Endothelial cell of umbilical vein (primary cell): ENCODE measurements at regions of chr17 and their contacts with region 1.

Region 1: GRCh38 chr17:29219378-29220047 is 27.1 kb upstream of the CRYBA1 start:
- DNase-seq: peak; percentile 86
- H3K4me3 ChIP-seq: no peak overlapping the region
- H3K27ac ChIP-seq: no peak overlapping the region
- H3K4me1 ChIP-seq: no peaks in the 10 kb centered on the region
- H3K27me3 ChIP-seq: no peaks in the 10 kb centered on the region
- CTCF ChIP-seq: peak; percentile 86 to 94
- POLR2A ChIP-seq: no peak

Region 2: GRCh38 chr17:29124117-29124924 is 95.2 kb before region 1 on chr17:
- CTCF ChIA-PET with region 1: interaction called, 125 read pairs
- POLR2A ChIA-PET with region 1: no interaction called
- dilution Hi-C with region 1: no loop called
- intact Hi-C with region 1: no loop called
- DNase-seq: peak; percentile 61
- H3K4me3 ChIP-seq: no peak overlapping the region
- H3K27ac ChIP-seq: no peak overlapping the region
- H3K4me1 ChIP-seq: no peaks in the 10 kb centered on the region
- H3K27me3 ChIP-seq: no peaks in the 10 kb centered on the region
- CTCF ChIP-seq: peak; percentile 60 to 61
- POLR2A ChIP-seq: no peak

Region 3: GRCh38 chr17:29195465-29196081 is 23.9 kb before region 1 on chr17:
- CTCF ChIA-PET with region 1: interaction called, 13 read pairs
- POLR2A ChIA-PET with region 1: no interaction called
- dilution Hi-C with region 1: no loop called
- intact Hi-C with region 1: no loop called
- DNase-seq: no peak
- H3K4me3 ChIP-seq: no peak overlapping the region
- H3K27ac ChIP-seq: no peak overlapping the region
- H3K4me1 ChIP-seq: no peaks in the 10 kb centered on the region
- H3K27me3 ChIP-seq: peaks cover 10 to 15% of the 10 kb centered on the region in 2 experiments
- CTCF ChIP-seq: no peak
- POLR2A ChIP-seq: no peak

Region 4: DNA sequence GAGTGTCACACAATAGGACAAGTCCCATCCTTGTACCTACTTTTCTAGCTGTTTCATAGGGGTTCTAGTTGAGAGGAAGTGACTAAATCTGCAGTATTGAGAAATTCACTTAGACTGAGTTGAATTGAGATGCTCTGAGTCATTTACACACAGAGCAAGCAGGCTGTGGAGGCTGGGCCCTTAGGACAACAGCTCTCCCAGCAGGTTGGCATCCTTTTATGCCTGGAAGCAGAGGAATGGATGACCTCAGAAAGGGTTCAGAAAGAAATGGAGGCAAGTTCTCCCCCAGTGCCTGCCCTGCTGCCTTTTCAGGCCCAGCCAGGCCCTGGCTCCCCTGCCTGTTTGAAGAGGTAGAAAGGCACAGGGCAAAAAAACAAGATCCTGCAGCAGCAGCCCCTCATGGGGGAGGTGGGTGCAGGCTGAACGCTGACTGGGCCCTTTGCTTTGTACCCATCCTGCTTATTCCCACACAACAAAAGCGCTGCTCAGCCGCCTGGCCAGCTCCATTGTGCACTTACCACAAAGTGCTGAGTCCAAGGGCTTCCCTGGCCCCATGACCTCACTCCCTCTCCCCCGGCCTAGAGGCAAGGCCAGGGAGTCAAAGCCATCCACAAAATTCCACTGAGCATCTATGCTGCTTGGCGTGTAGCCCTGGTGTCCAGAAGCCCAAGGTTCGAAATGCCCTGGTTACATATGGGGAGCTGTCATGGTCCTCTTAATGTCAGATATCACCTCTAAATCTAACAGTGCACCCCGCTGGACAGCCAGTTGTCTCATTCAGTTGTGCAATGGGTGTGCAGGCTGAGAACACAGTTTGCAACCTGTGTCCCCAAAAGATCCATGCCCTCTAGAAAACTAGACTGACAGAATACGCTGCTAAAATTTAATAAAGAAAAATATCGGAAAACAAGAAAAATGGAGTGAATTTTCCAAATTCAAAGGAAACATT is 21.8 kb after region 1 on chr17:
- CTCF ChIA-PET with region 1: interaction called, 33 read pairs
- POLR2A ChIA-PET with region 1: interaction called, 7 read pairs
- dilution Hi-C with region 1: no loop called
- intact Hi-C with region 1: no loop called
- DNase-seq: peak; percentile 82
- H3K4me3 ChIP-seq: no peak overlapping the region
- H3K27ac ChIP-seq: peak overlapping the region; percentile 41
- H3K4me1 ChIP-seq: peaks cover 12% of the 10 kb centered on the region
- H3K27me3 ChIP-seq: no peaks in the 10 kb centered on the region
- CTCF ChIP-seq: no peak
- POLR2A ChIP-seq: no peak

Region 5: DNA sequence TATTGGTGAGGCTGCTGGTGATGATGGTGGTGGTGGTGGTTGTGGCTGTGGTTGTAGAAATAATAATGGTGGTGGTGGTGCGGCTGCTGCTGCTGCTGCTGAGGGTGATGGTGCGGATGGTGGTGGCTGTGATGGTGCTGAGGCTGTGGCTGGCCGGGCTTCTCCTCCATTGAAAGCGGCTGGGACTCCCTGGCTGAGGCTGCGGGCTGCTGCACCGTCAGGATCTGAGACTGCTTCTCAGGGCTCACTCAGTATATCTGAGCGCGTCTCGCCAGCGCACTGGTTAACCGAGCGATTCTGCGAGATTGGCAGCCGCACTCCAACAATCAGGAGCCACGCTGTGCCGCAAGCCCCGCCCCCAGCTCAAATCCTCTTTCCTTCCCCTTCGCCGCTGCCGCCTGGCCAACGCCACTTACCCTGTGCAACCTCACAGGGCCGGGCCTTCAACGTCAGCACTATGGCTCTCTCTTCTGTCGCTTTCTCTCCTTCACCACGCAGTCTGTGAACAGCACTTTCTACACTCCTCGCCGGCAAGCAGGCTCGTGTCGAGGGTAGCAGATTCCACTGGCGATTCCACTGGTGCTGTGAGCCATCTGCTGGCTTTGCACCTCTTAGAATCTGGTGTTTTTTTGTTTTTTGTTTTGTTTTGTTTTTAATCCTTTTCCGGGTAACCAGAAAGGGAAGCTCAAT is 74.5 kb after region 1 on chr17 and contains the start of gene NUFIP2:
- CTCF ChIA-PET with region 1: interaction called, 28 read pairs
- POLR2A ChIA-PET with region 1: no interaction called
- dilution Hi-C with region 1: no loop called
- intact Hi-C with region 1: loop called (anchors 1 kb)
- DNase-seq: peak; percentile 99
- H3K4me3 ChIP-seq: peak within 1 kb of the TSS; percentile 70 to 95 (median 78)
- H3K27ac ChIP-seq: peak within 1 kb of the TSS; percentile 82
- H3K4me1 ChIP-seq: peaks cover 30% of the 10 kb centered on the region
- H3K27me3 ChIP-seq: no peaks in the 10 kb centered on the region
- CTCF ChIP-seq: no peak
- POLR2A ChIP-seq: peak; percentile 100
- total RNA-seq, gene NUFIP2: 51.1 and 60.7 TPM in 2 replicates

Region 6: GRCh38 chr17:29433541-29433940 is 214.0 kb after region 1 on chr17:
- CTCF ChIA-PET with region 1: no interaction called
- POLR2A ChIA-PET with region 1: no interaction called
- dilution Hi-C with region 1: no loop called
- intact Hi-C with region 1: no loop called
- DNase-seq: no peak
- H3K4me3 ChIP-seq: no peak overlapping the region
- H3K27ac ChIP-seq: no peak overlapping the region
- H3K4me1 ChIP-seq: no peaks in the 10 kb centered on the region
- H3K27me3 ChIP-seq: no peaks in the 10 kb centered on the region
- CTCF ChIP-seq: no peak
- POLR2A ChIP-seq: no peak